GM12878 (cell line): ENCODE measurements at regions of chr9 and their contacts with region 1.

Region 1: GRCh38 chr9:127916665-127917613 is at the start of gene ST6GALNAC4:
- DNase-seq: no peak
- ATAC-seq: peak; percentile 85
- H3K4me3 ChIP-seq: peak within 1 kb of the TSS; percentile 95
- H3K27ac ChIP-seq: peak within 1 kb of the TSS; percentile 98
- H3K4me1 ChIP-seq: peaks cover 38% of the 10 kb centered on the region
- H3K27me3 ChIP-seq: no peaks in the 10 kb centered on the region
- CTCF ChIP-seq: no peak
- EP300 ChIP-seq: no peak
- POLR2A ChIP-seq: peak; percentile 86
- RAD21 ChIP-seq: no peak
- polyA plus RNA-seq, gene ST6GALNAC4: 4.2 to 6.6 TPM

Region 2: DNA sequence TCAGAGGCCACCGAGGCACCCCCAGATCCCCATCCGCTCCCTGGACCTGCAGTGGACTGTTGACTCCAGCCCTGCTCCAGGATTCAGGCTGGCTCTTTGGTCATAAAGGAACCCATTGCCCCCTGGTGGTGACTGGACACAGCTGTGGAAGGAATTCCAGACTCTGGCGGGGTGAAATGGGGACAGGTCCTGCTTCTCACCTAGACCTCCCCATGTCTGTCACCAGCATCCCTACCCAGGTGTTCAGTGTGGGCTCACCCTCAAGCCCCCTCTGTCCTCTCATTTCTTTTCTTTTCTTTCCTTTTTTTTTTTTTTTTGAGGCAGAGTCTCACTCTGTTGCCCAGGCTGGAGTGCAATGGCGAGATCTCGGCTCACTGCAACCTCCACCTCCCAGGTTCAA is 330.4 kb before region 1 on chr9:
- CTCF ChIA-PET with region 1: interaction called, 18 read pairs
- POLR2A ChIA-PET with region 1: interaction called, 4 read pairs
- RAD21 ChIA-PET with region 1: interaction called, 4 read pairs
- SMC1A ChIA-PET with region 1: interaction called, 7 read pairs
- in situ Hi-C with region 1: loop called (anchors 5 kb)
- intact Hi-C with region 1: loop called (anchors 1 kb)
- DNase-seq: no peak
- ATAC-seq: peak; percentile 91
- H3K4me3 ChIP-seq: no peak overlapping the region
- H3K27ac ChIP-seq: no peak overlapping the region
- H3K4me1 ChIP-seq: no peaks in the 10 kb centered on the region; the same call in 1 of the 2 replicates
- H3K27me3 ChIP-seq: no peaks in the 10 kb centered on the region
- CTCF ChIP-seq: peak; percentile 77 to 91 (median 85)
- EP300 ChIP-seq: no peak
- POLR2A ChIP-seq: no peak
- RAD21 ChIP-seq: peak; percentile 86

Region 3: GRCh38 chr9:127689329-127690000 is 227.5 kb before region 1 on chr9:
- CTCF ChIA-PET with region 1: no interaction called
- POLR2A ChIA-PET with region 1: no interaction called
- RAD21 ChIA-PET with region 1: no interaction called
- SMC1A ChIA-PET with region 1: no interaction called
- in situ Hi-C with region 1: no loop called
- intact Hi-C with region 1: no loop called
- DNase-seq: no peak
- ATAC-seq: no peak
- H3K4me3 ChIP-seq: no peak overlapping the region
- H3K27ac ChIP-seq: no peak overlapping the region
- H3K4me1 ChIP-seq: no peaks in the 10 kb centered on the region
- H3K27me3 ChIP-seq: no peaks in the 10 kb centered on the region; a peak in 3 of 4 replicates
- CTCF ChIP-seq: no peak
- EP300 ChIP-seq: no peak
- POLR2A ChIP-seq: no peak
- RAD21 ChIP-seq: no peak

Region 4: GRCh38 chr9:127763918-127764384 is 153.0 kb before region 1 on chr9:
- CTCF ChIA-PET with region 1: interaction called, 3 read pairs
- POLR2A ChIA-PET with region 1: no interaction called
- RAD21 ChIA-PET with region 1: interaction called, 13 read pairs
- SMC1A ChIA-PET with region 1: interaction called, 5 read pairs
- in situ Hi-C with region 1: no loop called
- intact Hi-C with region 1: no loop called
- DNase-seq: no peak
- ATAC-seq: peak; percentile 78
- H3K4me3 ChIP-seq: no peak overlapping the region
- H3K27ac ChIP-seq: no peak overlapping the region
- H3K4me1 ChIP-seq: peaks cover 7% of the 10 kb centered on the region
- H3K27me3 ChIP-seq: no peaks in the 10 kb centered on the region
- CTCF ChIP-seq: peak; percentile 31 to 47 (median 45); a peak in 5 of 6 replicates
- EP300 ChIP-seq: no peak
- POLR2A ChIP-seq: no peak
- RAD21 ChIP-seq: peak; percentile 46

Region 5: GRCh38 chr9:127785023-127785932 is 131.7 kb before region 1 on chr9:
- CTCF ChIA-PET with region 1: interaction called, 9 read pairs
- POLR2A ChIA-PET with region 1: interaction called, 16 read pairs
- RAD21 ChIA-PET with region 1: interaction called, 15 read pairs
- SMC1A ChIA-PET with region 1: interaction called, 9 read pairs
- in situ Hi-C with region 1: no loop called
- intact Hi-C with region 1: loop called (anchors 2 kb)
- DNase-seq: no peak
- ATAC-seq: peak; percentile 59
- H3K4me3 ChIP-seq: peak overlapping the region; percentile 85
- H3K27ac ChIP-seq: peak overlapping the region; percentile 82
- H3K4me1 ChIP-seq: peaks cover 41% of the 10 kb centered on the region
- H3K27me3 ChIP-seq: no peaks in the 10 kb centered on the region
- CTCF ChIP-seq: peak; percentile 65 to 89 (median 82)
- EP300 ChIP-seq: no peak
- POLR2A ChIP-seq: peak; percentile 44
- RAD21 ChIP-seq: peak; percentile 78

Region 6: DNA sequence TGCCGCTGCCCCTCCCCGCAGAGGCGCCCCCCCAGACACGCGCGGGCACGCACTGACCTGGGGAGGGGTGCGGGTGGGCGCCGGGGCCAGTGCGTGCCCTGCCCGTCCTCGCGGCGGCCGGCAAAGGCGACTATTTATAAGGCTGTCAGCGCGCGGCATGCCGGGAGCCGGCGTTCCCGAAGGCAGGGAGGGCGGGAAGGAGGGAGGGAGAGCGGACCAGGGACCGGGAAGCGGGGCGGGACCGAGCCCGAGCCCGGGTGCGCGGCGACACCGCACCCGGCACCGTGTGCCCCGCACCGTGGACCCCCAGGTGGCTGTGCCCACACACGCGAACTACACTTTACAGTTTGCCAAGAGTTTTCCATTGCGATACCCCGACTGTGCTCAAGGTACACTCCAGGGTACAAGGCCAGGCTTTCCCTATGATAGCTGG is 39.4 kb before region 1 on chr9 and contains the start of gene AK1:
- CTCF ChIA-PET with region 1: interaction called, 91 read pairs
- POLR2A ChIA-PET with region 1: interaction called, 3 read pairs
- RAD21 ChIA-PET with region 1: interaction called, 9 read pairs
- SMC1A ChIA-PET with region 1: interaction called, 10 read pairs
- in situ Hi-C with region 1: no loop called
- intact Hi-C with region 1: loop called (anchors 5 kb)
- DNase-seq: no peak
- ATAC-seq: no peak
- H3K4me3 ChIP-seq: no peak within 1 kb of the TSS; the same call in 1 of the 2 replicates
- H3K27ac ChIP-seq: no peak within 1 kb of the TSS
- H3K4me1 ChIP-seq: peaks cover 5% of the 10 kb centered on the region; the same call in 1 of the 2 replicates
- H3K27me3 ChIP-seq: no peaks in the 10 kb centered on the region; a peak in 1 of 4 replicates
- CTCF ChIP-seq: no peak
- EP300 ChIP-seq: no peak
- POLR2A ChIP-seq: no peak
- RAD21 ChIP-seq: no peak
- polyA plus RNA-seq, gene AK1: 0.23 to 1.4 TPM

Region 7: DNA sequence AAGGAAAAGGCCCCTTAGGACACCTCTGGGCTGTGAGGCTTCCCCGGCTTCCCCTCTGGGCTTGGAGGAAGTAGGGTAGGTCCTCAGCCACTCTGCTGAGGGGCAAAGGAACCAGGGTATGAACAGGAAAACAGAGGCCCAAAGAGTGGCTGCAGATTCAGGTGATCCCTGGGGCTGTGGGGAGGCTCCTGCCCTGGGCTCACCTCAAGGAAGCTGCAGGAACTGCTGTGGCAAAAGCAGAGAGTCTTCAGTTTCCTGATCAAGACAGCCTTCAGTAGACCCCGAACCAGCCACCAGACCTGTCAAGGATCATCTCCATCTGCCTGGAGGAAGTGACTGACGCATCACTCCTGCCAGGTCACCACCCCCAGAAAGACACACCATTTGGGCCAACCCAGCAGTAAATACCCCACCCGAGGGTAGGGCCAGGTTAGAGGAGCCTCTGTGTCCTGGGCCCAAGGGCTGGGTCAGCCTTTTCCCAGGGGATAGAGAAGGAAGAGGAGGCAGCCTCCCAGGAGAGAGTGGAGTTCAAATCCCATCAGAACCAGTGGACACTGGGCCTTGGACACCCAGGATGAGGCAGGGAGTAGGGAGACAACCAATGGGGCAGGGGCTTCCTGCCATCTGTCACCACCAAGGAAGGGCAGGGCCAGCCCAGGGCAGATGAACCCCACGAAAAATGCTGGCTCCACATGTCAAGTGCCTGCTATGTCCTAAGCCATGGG is 11.8 kb before region 1 on chr9:
- CTCF ChIA-PET with region 1: interaction called, 24 read pairs
- POLR2A ChIA-PET with region 1: interaction called, 166 read pairs
- RAD21 ChIA-PET with region 1: interaction called, 92 read pairs
- SMC1A ChIA-PET with region 1: interaction called, 37 read pairs
- in situ Hi-C with region 1: no loop called
- intact Hi-C with region 1: no loop called
- DNase-seq: no peak
- ATAC-seq: peak; percentile 31
- H3K4me3 ChIP-seq: peak overlapping the region; percentile 17; the same call in 1 of the 2 replicates
- H3K27ac ChIP-seq: peak overlapping the region; percentile 90
- H3K4me1 ChIP-seq: peaks cover 60% of the 10 kb centered on the region
- H3K27me3 ChIP-seq: no peaks in the 10 kb centered on the region
- CTCF ChIP-seq: no peak
- EP300 ChIP-seq: no peak
- POLR2A ChIP-seq: peak; percentile 63
- RAD21 ChIP-seq: no peak